ENCODE measurements at regions of chr7 and their contacts with region 1.

Region 1: GRCh38 chr7:44847508-44847920 is 373 bp downstream of the H2AZ2 start:
- DNase-seq: peak; percentile 89
- H3K4me3 Mint-ChIP-seq: peak overlapping the region; percentile 96
- H3K27ac Mint-ChIP-seq: peak overlapping the region; percentile 99
- H3K4me1 Mint-ChIP-seq: peaks cover 42% of the 10 kb centered on the region
- H3K27me3 Mint-ChIP-seq: no peaks in the 10 kb centered on the region

Region 2: DNA sequence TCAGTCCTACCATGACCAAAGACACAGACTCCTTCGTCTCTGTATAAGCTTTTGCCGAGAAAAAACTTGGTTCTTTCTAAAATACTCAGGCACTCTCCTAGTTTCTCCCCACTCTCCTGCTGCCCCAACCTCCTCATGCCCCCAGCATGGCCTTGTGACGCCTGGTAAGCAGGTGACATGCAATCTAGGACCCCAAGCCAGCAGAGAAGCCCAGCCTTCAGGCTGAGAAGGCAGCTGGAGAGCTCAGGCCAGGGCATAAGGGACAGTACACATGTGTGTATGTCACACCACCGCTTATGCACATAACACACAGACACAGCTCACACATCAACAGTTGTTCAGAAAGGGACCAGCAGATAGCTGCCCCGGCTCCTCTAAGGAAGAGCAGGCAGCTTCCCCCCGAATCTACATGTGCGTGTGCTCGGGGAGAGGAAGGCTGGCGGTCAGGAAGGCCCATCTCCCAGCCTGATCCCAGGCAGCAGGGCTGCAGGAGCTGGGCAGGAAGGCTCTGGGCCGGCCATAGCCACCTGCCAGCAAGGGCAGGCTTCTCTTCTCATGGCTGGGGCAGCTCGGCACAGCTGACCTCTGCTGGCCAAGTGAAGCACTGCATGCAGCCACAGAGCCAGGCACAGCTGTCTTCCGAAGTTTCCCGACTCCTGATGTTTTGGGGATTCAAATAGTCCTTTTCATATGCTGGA is 282.3 kb before region 1 on chr7:
- CTCF ChIA-PET with region 1: interaction called, 5 read pairs
- POLR2A ChIA-PET with region 1: interaction called, 11 read pairs
- DNase-seq: peak; percentile 73
- H3K4me3 Mint-ChIP-seq: no peak overlapping the region
- H3K27ac Mint-ChIP-seq: no peak overlapping the region
- H3K4me1 Mint-ChIP-seq: peaks cover 2% of the 10 kb centered on the region
- H3K27me3 Mint-ChIP-seq: no peaks in the 10 kb centered on the region

Region 3: GRCh38 chr7:44606450-44607254 is 240.9 kb before region 1 on chr7 and contains the start of gene OGDH:
- CTCF ChIA-PET with region 1: interaction called, 16 read pairs
- POLR2A ChIA-PET with region 1: interaction called, 51 read pairs
- DNase-seq: peak; percentile 100
- H3K4me3 Mint-ChIP-seq: peak within 1 kb of the TSS; percentile 98
- H3K27ac Mint-ChIP-seq: peak within 1 kb of the TSS; percentile 98
- H3K4me1 Mint-ChIP-seq: peaks cover 48% of the 10 kb centered on the region
- H3K27me3 Mint-ChIP-seq: peaks cover 6% of the 10 kb centered on the region
- total RNA-seq, gene OGDH: 164 to 166 TPM

Region 4: DNA sequence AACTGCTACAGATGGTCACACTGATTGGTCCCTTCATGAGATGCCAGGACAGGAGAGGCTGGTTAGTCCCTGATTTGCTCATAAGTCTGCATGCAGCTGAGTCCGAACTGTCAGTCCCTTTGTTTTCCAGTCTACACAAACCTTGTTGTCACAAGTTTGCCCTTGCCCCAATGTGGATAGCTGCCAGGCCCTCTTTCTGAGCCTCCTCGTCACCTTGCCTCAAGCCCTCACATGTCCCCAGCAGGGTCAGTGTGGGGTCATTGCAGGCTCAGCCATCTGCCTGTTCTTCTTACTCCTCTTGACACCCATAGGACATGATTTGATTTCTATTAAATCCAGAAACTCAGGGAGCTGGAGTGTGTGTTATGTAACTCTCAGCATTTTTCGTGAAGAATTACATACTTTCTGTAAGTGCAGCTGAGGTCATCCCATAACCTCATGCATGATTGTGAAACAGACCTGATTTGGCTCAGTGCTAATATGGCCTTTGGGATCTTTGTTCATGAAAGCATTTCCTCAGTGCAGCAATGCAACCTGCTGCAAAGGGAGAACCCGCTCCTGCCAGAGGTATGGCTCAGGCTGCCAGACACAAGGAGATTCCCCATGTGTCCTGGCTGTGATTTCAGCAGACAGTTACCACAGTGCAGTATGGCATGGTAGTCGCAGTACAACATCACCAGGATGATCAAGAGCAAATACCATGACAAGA is 168.9 kb before region 1 on chr7:
- CTCF ChIA-PET with region 1: no interaction called
- POLR2A ChIA-PET with region 1: no interaction called
- DNase-seq: no peak
- H3K4me3 Mint-ChIP-seq: no peak overlapping the region
- H3K27ac Mint-ChIP-seq: no peak overlapping the region
- H3K4me1 Mint-ChIP-seq: no peaks in the 10 kb centered on the region
- H3K27me3 Mint-ChIP-seq: no peaks in the 10 kb centered on the region

Region 5: GRCh38 chr7:44727158-44727933 is 120.2 kb before region 1 on chr7:
- CTCF ChIA-PET with region 1: no interaction called
- POLR2A ChIA-PET with region 1: no interaction called
- DNase-seq: no peak
- H3K4me3 Mint-ChIP-seq: no peak overlapping the region
- H3K27ac Mint-ChIP-seq: no peak overlapping the region
- H3K4me1 Mint-ChIP-seq: peaks cover 3% of the 10 kb centered on the region
- H3K27me3 Mint-ChIP-seq: peaks cover 9% of the 10 kb centered on the region

Region 6: DNA sequence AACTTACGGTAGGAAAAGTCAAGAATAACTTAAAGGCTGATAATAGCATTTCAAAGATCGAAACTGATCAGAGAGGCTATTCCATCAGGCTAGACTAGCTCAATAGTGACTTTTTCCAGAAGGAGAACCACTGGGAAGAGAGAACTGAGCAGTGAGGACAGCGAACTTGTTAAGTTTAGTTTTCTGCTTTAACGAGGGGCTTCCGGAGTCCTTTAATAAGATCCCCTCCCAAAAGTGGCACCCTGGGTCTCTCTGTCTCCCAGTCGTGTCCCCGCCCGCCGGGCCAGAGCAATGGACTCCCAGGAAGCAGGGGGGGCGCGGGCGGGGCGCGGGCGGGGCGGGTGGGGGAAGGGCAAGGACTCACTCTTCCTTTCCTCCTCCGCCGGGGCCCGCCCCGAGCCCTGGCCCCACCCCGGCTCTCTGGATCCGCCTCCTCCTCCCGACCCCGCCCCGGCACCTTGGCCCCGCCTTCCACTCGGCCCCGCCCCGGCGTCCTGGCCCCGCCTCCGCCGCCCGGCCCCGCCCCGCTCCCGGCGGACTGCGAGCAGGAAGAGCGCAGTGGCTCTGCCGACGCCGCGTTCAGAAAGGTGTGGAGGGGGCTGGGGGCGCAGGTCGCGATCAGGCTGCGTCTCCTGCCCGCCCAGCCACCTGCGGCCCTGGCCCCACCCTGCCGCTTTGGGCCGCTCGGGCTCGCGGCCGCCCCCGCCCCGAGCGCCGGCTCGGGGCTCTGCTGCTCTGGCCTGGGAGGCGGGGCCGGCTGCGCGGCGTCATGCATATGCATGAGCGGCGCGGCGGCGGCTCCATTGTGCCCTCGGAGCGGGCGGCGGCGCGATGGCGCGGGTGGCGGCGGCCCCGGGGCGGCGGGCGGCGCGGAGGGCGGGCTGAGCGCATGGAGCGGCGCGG is 99.2 kb before region 1 on chr7 and contains the start of gene ZMIZ2:
- CTCF ChIA-PET with region 1: no interaction called
- POLR2A ChIA-PET with region 1: interaction called, 16 read pairs
- DNase-seq: peak; percentile 92
- H3K4me3 Mint-ChIP-seq: peak within 1 kb of the TSS; percentile 84
- H3K27ac Mint-ChIP-seq: peak within 1 kb of the TSS; percentile 66
- H3K4me1 Mint-ChIP-seq: peaks cover 43% of the 10 kb centered on the region
- H3K27me3 Mint-ChIP-seq: no peaks in the 10 kb centered on the region
- total RNA-seq, gene ZMIZ2: 85.2 to 91.4 TPM

Region 7: GRCh38 chr7:44858161-44858560 is 10.6 kb after region 1 on chr7:
- CTCF ChIA-PET with region 1: interaction called, 23 read pairs
- POLR2A ChIA-PET with region 1: interaction called, 26 read pairs
- DNase-seq: no peak
- H3K4me3 Mint-ChIP-seq: no peak overlapping the region
- H3K27ac Mint-ChIP-seq: no peak overlapping the region
- H3K4me1 Mint-ChIP-seq: peaks cover 19% of the 10 kb centered on the region
- H3K27me3 Mint-ChIP-seq: peaks cover 5% of the 10 kb centered on the region

Region 8: DNA sequence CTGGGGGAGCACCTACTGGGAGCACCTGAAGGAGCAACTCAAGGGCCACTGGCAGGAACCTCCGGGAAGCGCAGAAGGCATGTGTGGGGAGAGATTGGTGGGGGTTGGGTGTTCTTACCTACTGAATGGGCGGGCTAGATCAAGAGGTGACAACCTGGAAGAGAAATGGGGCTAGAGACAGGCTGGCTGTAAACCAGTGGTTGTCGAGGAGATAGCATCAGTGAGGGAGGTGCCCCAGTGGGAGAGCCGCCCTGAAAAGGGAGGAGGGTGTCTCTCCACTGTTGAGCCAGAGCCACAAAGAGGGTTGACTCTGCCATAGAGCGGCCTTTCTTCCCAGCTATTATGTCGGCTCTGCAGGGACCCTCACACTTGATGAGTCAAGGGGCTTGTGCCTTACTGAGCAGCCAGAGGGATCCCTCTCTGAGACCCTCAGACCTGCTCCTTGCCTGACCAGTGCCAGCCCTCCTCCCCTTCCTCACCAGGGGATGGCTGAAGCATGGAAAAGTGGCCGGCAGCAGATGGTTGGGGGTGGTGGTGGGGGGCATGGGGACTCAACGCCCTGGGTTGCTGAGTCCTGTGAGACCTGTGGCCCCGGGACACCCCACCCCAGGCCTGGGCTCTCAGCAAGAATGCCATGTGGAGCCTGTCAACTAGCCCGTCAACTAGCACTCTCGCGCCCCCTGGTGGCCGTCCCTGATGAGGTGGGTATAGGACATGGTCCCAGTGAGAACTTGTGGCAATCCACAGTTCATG is 74.3 kb after region 1 on chr7:
- CTCF ChIA-PET with region 1: interaction called, 160 read pairs
- POLR2A ChIA-PET with region 1: interaction called, 15 read pairs
- DNase-seq: peak; percentile 95
- H3K4me3 Mint-ChIP-seq: no peak overlapping the region
- H3K27ac Mint-ChIP-seq: no peak overlapping the region
- H3K4me1 Mint-ChIP-seq: peaks cover 14% of the 10 kb centered on the region
- H3K27me3 Mint-ChIP-seq: peaks cover 6% of the 10 kb centered on the region

Region 9: GRCh38 chr7:45026984-45027773 is 179.7 kb after region 1 on chr7:
- CTCF ChIA-PET with region 1: no interaction called
- POLR2A ChIA-PET with region 1: interaction called, 21 read pairs
- DNase-seq: peak; percentile 46
- H3K4me3 Mint-ChIP-seq: peak overlapping the region; percentile 83
- H3K27ac Mint-ChIP-seq: peak overlapping the region; percentile 81
- H3K4me1 Mint-ChIP-seq: peaks cover 64% of the 10 kb centered on the region
- H3K27me3 Mint-ChIP-seq: no peaks in the 10 kb centered on the region

Measured in activated CD4-positive, alpha-beta memory T cell treated with anti-CD3 and anti-CD28 coated beads, Interleukin-2, amount 10 ng/mL, durations not matched to agents 7 days and 5 days (primary cell).